ENCODE measurements at regions of chr6 and their contacts with region 1.

Region 1: DNA sequence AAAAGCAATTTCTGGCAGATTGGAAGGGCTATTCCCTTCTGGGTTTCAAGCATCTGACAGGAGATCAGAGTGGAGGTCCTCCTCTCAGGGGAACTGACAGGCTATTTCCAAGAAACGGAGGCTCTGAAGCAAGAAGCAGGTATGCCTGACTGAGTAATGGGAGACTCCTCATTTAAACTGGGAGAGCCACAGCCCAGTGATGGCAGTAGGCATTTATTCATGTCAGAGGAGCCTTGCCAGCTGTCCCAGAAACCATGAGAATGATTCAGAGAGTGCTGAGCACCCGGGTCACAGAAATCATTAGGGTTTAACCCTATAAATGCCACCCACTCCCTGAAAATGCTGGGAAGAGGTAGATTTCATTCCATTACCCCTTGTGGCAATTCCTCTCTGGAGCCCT is 247.5 kb upstream of the RNF217 start:
- DNase-seq: no peak
- ATAC-seq: no peak
- H3K4me3 ChIP-seq: no peak overlapping the region
- H3K27ac ChIP-seq: no peak overlapping the region
- H3K4me1 ChIP-seq: no peaks in the 10 kb centered on the region
- H3K27me3 ChIP-seq: no peaks in the 10 kb centered on the region
- CTCF ChIP-seq: no peak
- POLR2A ChIP-seq: no peak

Region 2: DNA sequence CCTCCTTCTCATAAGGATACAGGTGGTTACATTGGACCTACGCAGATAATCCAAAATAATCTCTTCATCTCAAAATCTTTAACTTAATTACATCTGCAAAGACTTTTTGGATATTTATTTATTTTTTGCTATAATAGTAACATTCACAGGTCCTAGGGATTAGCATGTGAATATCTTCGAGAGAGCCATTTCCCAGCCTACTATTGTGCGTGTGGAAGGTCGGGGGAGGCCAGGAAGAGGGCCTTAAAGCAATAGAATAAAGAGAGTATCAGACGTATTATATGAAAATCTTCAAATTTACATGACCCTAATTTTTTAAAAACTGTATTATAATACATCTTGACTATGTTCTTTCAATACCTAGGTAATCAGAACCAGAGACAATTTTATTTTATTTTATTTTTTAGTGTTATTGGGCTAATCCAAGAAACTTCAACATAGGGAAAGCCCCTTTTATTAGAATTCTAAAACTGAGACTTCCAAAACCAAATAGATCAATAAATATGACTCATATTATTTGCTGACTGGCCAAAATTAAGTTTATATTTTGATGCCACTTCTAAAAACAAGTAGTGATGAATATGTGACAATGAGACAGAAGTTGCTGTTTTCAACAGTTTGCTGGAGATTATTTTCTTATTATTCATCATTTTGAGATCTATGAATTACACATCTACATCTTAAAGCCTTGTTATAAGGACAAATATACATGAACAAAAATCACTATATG is 375.0 kb before region 1 on chr6:
- in situ Hi-C with region 1: no loop called
- intact Hi-C with region 1: loop called (anchors 5 kb)
- DNase-seq: no peak
- ATAC-seq: no peak
- H3K4me3 ChIP-seq: no peak overlapping the region
- H3K27ac ChIP-seq: no peak overlapping the region
- H3K4me1 ChIP-seq: no peaks in the 10 kb centered on the region
- H3K27me3 ChIP-seq: no peaks in the 10 kb centered on the region
- CTCF ChIP-seq: no peak
- POLR2A ChIP-seq: no peak

Region 3: GRCh38 chr6:124371974-124372475 is 342.7 kb before region 1 on chr6:
- in situ Hi-C with region 1: no loop called
- intact Hi-C with region 1: no loop called
- DNase-seq: no peak
- ATAC-seq: no peak
- H3K4me3 ChIP-seq: no peak overlapping the region
- H3K27ac ChIP-seq: no peak overlapping the region
- H3K4me1 ChIP-seq: no peaks in the 10 kb centered on the region
- H3K27me3 ChIP-seq: no peaks in the 10 kb centered on the region
- CTCF ChIP-seq: no peak
- POLR2A ChIP-seq: no peak

Measured in gastrocnemius medialis (tissue), 4 donors.